ENCODE measurements at regions of chr9 and their contacts with region 1.

Region 1: GRCh38 chr9:95048225-95049087 is 269.1 kb downstream of the FANCC start:
- DNase-seq: peak; percentile 72
- ATAC-seq: peak; percentile 65
- H3K4me3 Mint-ChIP-seq: peak overlapping the region; percentile 81
- H3K27ac Mint-ChIP-seq: no peak overlapping the region
- H3K4me1 Mint-ChIP-seq: peaks cover 59% of the 10 kb centered on the region
- H3K27me3 Mint-ChIP-seq: peaks cover 31% of the 10 kb centered on the region
- CTCF ChIP-seq: no peak

Region 2: GRCh38 chr9:94952565-94953373 is 95.7 kb before region 1 on chr9:
- CTCF ChIA-PET with region 1: no interaction called
- POLR2A ChIA-PET with region 1: no interaction called
- DNase-seq: no peak
- ATAC-seq: no peak
- H3K4me3 Mint-ChIP-seq: no peak overlapping the region
- H3K27ac Mint-ChIP-seq: peak overlapping the region; percentile 44; the same call in 1 of the 2 replicates
- H3K4me1 Mint-ChIP-seq: peaks cover 52% of the 10 kb centered on the region
- H3K27me3 Mint-ChIP-seq: no peaks in the 10 kb centered on the region
- CTCF ChIP-seq: no peak

Region 3: DNA sequence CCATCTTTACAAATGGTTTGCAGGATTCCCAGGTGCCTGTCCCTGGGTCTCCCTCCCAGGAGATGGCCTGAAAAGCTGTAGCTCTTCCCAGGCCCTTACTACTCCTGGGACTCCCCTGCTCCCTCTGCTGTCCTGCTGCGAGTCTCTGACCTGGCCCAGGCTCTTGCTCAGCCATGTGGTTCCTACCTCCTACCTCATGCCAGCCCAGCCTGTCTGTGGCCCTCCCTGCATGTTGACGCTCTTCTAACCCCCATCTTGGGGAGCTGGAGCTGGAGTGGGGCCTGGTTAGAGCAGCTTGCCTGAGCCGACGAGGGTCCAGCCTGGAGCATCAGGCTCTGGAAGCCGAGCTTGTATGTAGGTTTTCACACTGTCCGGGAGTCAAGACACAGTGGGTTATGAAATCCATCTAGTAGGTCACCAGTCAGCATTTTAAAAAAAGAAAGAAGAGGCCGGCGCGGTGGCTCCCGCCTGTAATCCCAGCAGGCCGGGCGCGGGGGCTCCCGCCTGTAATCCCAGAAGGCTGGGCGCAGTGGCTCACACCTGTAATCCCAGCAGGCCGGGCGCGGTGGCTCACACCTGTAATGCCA is 24.7 kb after region 1 on chr9:
- CTCF ChIA-PET with region 1: interaction called, 18 read pairs
- POLR2A ChIA-PET with region 1: no interaction called
- DNase-seq: peak; percentile 47
- ATAC-seq: peak; percentile 91
- H3K4me3 Mint-ChIP-seq: no peak overlapping the region
- H3K27ac Mint-ChIP-seq: no peak overlapping the region
- H3K4me1 Mint-ChIP-seq: peaks cover 30% of the 10 kb centered on the region
- H3K27me3 Mint-ChIP-seq: no peaks in the 10 kb centered on the region
- CTCF ChIP-seq: no peak

Region 4: GRCh38 chr9:95109456-95109855 is 61.0 kb after region 1 on chr9:
- CTCF ChIA-PET with region 1: no interaction called
- POLR2A ChIA-PET with region 1: no interaction called
- DNase-seq: no peak
- ATAC-seq: no peak
- H3K4me3 Mint-ChIP-seq: no peak overlapping the region
- H3K27ac Mint-ChIP-seq: no peak overlapping the region
- H3K4me1 Mint-ChIP-seq: no peaks in the 10 kb centered on the region
- H3K27me3 Mint-ChIP-seq: no peaks in the 10 kb centered on the region
- CTCF ChIP-seq: no peak